Activated T-helper 1 cell treated with anti-CD3 and anti-CD28 coated beads, Interleukin-12 subunit alpha, Interleukin-12 subunit beta, Interleukin-2, Interleukin-4 antibody, amounts not matched to agents 30 ng/mL and 10 ng/mL and 1 ng/mL, durations not matched to agents 14 hours and 24 hours and 36 hours (primary cell): ENCODE measurements at regions of chr4 and their contacts with region 1.

Region 1: DNA sequence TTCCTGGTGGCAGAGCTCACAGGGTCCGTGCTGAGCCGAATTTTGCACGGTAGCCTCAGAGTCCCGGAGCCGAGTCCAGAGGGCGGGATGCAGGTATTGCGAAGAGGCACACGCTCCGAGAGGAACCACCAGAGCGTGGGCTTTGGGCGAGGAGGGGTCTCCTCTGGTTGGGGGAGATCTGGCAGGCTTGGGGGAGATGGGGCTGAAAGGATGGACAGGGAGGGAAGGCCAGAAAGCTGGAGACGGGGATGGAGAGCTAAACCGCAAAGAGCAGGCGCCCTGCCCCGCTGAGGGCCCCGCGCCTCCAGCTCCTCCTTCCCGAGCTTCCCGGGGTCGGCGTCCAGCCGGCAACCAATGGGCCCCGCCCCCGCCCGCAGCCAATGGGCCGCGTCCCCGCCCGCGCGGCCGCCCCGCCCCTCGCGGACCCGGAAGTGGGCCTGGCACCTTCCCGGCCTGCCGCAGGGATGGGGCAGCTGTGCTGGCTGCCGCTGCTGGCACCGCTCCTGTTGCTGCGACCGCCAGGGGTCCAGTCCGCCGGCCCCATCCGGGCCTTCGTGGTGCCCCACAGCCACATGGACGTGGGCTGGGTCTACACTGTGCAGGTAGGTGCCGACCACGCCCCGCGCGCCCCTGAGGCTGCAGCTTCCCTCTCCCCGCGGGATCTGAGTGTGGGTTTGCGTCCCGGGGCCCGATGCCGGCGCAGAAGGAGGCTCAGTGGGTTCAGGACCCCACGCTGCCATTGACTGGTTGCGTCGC is at the start of gene MAN2B2:
- DNase-seq: peak; percentile 83
- H3K4me3 Mint-ChIP-seq: peak within 1 kb of the TSS; percentile 87
- H3K27ac Mint-ChIP-seq: peak within 1 kb of the TSS; percentile 71
- H3K4me1 Mint-ChIP-seq: no peaks in the 10 kb centered on the region
- H3K27me3 Mint-ChIP-seq: peaks cover 5% of the 10 kb centered on the region
- total RNA-seq, gene MAN2B2: 13.9 and 14.0 TPM in 2 replicates

Region 2: GRCh38 chr4:6546681-6547447 is 28.1 kb before region 1 on chr4:
- intact Hi-C with region 1: loop called (anchors 1 kb)
- DNase-seq: peak; percentile 39
- H3K4me3 Mint-ChIP-seq: no peak overlapping the region
- H3K27ac Mint-ChIP-seq: no peak overlapping the region
- H3K4me1 Mint-ChIP-seq: no peaks in the 10 kb centered on the region
- H3K27me3 Mint-ChIP-seq: peaks cover 2% of the 10 kb centered on the region